Right ventricle myocardium inferior (tissue), 1 donor: ENCODE measurements at regions of chr10 and their contacts with region 1.

Region 1: GRCh38 chr10:11260170-11260569 is 242.5 kb downstream of the CELF2 start:
- DNase-seq: no peak
- ATAC-seq: no peak

Region 2: DNA sequence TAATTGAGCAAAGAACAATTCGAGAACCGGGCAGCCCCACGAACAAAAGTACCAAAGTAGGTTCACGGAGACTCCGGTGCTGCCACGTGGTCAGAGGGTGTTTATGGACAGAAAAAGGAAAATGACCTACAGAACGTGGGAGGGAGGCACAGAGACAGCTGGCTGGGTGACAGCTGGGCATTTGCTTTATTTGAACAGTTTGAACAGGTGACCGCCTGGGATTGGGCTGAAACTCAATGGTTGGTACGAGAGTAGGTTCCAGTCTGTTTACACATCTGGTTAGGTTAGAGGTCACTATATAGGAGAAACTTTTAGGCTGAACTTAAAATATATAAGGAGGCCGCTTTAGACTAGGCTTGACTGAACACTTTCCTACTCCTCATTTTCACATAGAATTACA is 293.1 kb before region 1 on chr10:
- intact Hi-C with region 1: no loop called
- DNase-seq: no peak
- ATAC-seq: no peak

Region 3: DNA sequence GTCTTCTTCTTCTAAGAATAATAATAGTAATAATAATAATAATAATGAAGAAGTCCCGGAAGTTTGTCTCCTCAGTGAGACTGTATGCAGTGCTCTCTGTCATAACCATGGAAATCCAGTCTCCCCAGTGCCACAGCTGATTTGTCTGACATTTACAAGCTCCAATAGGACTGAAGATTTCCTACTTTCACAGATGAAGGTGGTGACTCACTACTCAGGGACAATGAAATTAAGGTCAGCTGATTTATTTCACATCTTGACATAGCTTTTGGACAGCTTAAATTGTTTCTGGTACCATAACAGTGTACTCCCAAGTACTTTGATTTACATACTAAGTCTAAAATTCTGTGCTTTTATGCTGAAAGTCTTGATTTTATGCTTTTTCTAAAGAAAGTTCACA is 235.6 kb before region 1 on chr10:
- intact Hi-C with region 1: loop called (anchors 5 kb)
- DNase-seq: no peak
- ATAC-seq: peak; percentile 45

Region 4: DNA sequence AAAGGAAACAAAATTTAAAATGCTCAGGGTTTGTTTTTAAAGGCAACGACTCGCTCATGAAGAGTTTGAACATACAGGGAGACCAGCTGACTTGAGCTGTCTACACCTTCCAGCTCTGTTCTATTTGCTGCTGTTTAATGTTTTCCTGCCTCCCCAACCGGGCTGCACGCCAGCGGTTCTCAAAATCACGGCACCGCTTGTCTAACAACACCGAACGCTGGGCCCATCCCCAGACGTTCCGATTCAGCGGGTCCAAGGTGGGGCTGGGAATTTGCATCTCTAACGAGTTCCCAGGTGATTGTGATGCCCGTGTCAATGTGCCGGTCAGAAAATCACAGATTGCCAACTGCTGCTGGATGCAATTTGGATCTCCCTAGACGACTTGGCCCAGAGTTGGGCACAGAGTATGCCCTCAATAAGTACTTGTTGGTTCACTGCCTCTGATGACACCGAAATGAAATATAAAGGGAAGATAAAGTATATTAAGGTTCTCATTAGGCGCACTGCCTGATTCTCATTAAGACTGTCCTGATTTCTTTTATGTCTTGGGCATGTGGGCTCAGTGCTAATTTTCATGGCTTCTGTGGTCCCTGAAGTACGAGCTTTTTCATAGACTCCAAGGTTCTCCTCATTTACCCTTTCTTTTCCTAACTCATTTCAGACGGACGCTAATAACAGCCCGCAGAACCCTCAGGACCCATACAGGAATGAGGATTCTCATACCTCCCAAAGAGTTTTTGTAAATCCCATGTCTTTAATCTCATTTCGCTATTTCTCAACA is 214.0 kb before region 1 on chr10:
- intact Hi-C with region 1: loop called (anchors 5 kb)
- DNase-seq: peak; percentile 91
- ATAC-seq: peak; percentile 82

Region 5: GRCh38 chr10:11115337-11115736 is 144.8 kb before region 1 on chr10:
- intact Hi-C with region 1: loop called (anchors 5 kb)
- DNase-seq: no peak
- ATAC-seq: peak; percentile 58

Region 6: GRCh38 chr10:11178606-11179515 is 81.3 kb before region 1 on chr10:
- intact Hi-C with region 1: loop called (anchors 5 kb)
- DNase-seq: no peak
- ATAC-seq: peak; percentile 72

Region 7: DNA sequence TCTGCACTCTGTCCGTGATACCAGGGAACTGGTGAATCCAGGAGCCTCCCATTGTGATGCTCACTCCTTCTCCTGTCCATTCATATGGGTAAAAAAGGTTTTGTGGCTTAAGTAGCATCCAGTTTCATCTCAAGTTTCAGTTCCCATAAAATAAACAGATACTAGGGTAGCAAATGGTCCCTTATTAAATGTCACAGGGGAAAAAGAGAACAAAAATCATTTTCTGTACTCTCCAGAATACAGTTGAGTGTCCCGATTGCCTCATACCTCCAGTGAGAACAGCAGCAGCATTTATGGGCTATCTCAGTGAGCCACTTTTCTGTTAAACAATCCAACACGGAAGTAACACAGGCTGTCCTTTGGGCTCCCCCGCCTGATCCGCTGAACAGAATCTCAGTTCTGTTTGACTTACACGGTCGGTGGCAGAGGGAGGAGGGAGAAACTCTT is 62.9 kb before region 1 on chr10:
- intact Hi-C with region 1: loop called (anchors 5 kb)
- DNase-seq: no peak
- ATAC-seq: peak; percentile 91

Region 8: GRCh38 chr10:11242443-11243387 is 17.5 kb before region 1 on chr10:
- intact Hi-C with region 1: loop called (anchors 2 kb)
- DNase-seq: peak; percentile 79
- ATAC-seq: peak; percentile 92